ENCODE measurements at regions of chr5 and their contacts with region 1.

Region 1: DNA sequence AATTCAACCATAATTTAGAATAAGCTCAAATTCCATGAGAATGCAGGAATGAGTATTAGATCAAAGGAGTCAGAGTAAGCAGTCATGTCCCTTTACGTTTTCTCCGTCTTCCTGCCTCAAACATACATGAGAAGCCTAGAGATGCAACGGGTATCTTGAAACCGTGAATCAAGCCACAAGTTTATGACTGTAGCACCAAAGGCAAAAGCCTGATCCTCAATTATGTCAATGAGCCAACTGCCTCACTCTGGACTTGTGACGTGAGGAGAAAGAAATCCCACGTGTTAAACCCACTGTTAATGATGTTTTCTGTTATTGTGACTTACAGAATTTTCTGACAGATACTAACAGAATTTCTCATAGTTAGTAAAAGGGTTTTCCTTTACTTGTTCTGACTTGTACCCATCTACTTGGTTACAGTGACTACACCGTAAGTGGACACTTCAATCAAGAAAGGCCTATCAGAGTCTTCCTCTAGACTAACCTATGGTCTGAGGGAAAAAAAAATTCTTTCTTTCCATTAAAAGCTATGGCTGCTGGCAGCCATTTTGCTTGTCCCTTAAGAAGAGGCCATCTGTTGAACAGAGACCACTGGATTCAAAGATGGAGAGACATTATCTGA is 35.3 kb upstream of the HK3 start:
- DNase-seq: no peak
- H3K4me3 Mint-ChIP-seq: no peak overlapping the region
- H3K27ac Mint-ChIP-seq: no peak overlapping the region
- H3K4me1 Mint-ChIP-seq: peaks cover 9% of the 10 kb centered on the region
- H3K27me3 Mint-ChIP-seq: no peaks in the 10 kb centered on the region

Region 2: GRCh38 chr5:176918613-176919012 is 15.8 kb before region 1 on chr5:
- intact Hi-C with region 1: loop called (anchors 2 kb)
- DNase-seq: no peak
- H3K4me3 Mint-ChIP-seq: no peak overlapping the region
- H3K27ac Mint-ChIP-seq: no peak overlapping the region
- H3K4me1 Mint-ChIP-seq: peaks cover 14% of the 10 kb centered on the region
- H3K27me3 Mint-ChIP-seq: no peaks in the 10 kb centered on the region

Region 3: DNA sequence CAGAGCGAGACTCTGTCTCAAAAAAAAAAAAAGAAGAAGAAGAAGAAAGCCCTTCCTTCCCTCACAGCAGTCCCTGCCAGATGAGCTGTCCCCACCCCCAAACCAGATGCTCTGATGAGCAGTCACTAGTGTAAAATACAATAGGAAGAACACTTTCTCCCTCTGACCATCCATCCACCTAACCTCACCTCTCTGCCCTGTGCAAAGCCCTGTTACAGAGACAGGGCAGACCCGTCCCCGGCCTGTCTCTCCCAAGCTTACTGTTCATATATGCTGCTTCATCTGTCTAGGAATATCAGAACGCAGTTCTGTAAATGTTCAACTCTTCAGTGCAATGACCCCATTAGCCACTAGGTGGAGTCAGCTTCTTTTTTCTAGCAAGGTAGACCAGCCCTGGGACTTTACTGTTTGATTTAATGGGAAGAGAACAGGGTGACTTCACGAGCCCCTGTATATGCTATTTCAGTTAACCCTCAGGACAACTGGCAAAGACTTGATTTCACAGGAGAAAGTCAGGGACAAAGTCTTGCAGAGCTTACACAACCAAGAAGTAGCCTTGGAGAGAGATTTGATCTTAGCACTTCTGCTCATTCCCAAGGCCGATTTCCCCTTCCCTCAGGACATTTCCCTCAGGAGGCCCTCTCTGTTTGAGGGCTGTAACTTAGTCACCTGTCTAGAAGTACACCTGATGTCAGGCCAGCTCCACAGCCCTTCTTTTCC is 137.4 kb after region 1 on chr5:
- intact Hi-C with region 1: no loop called
- DNase-seq: peak; percentile 49
- H3K4me3 Mint-ChIP-seq: no peak overlapping the region
- H3K27ac Mint-ChIP-seq: no peak overlapping the region
- H3K4me1 Mint-ChIP-seq: peaks cover 5% of the 10 kb centered on the region
- H3K27me3 Mint-ChIP-seq: no peaks in the 10 kb centered on the region

Measured in activated T-helper 1 cell treated with anti-CD3 and anti-CD28 coated beads, Interleukin-12 subunit alpha, Interleukin-12 subunit beta, Interleukin-2, Interleukin-4 antibody, amounts not matched to agents 30 ng/mL and 10 ng/mL and 1 ng/mL, durations not matched to agents 14 hours and 24 hours and 36 hours (primary cell).